ENCODE measurements at regions of chr17 and their contacts with region 1.

Region 1: DNA sequence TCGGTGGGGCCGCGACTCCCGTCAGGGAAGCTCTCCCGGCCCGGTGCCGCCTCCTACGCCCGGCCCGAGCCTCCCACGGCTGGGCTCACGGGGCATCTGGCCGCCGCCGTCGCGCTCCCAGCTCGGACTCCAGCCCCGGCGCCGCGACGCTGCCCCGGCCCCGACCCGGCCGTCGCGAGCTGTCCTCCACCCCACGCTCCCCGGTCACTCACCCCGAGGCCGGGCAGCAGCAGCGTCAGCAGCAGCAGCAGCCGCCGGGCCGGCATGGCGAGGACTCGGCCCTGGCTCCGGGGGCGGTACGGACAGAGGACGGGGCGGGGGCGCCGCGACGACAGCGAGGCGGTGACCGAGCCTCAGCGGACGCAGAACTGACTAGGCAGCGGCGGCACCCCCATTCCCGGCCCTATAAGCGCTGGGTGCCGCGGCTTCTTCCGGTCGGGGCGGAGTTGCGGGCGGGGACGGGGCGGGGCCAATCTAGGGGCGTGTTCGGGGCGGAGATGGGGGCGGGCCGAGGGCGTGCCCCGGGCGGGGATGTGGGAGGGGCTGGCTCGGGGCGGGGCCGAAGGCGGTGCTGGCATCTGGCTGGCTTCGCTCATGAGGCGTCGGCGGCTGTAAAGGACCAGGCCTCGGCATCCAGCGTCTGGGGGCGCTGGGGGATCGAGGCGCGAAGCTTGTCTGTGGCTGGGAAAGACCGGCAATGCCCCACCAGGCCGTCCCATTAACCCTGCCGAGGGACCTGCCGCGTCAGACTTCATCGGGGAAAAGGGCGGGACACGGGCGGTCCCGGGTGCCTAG is at the start of gene ERN1:
- DNase-seq: peak; percentile 81
- ATAC-seq: peak; percentile 88
- H3K4me3 Mint-ChIP-seq: peak within 1 kb of the TSS; percentile 83
- H3K27ac Mint-ChIP-seq: peak within 1 kb of the TSS; percentile 88
- H3K4me1 Mint-ChIP-seq: peaks cover 27% of the 10 kb centered on the region
- H3K27me3 Mint-ChIP-seq: peaks cover 1% of the 10 kb centered on the region
- CTCF ChIP-seq: no peak
- total RNA-seq, gene ERN1: 11.9 and 12.9 TPM in 2 replicates

Region 2: GRCh38 chr17:63697341-63698286 is 432.3 kb before region 1 on chr17:
- CTCF ChIA-PET with region 1: no interaction called
- POLR2A ChIA-PET with region 1: no interaction called
- intact Hi-C with region 1: loop called (anchors 2 kb)
- DNase-seq: peak; percentile 78
- ATAC-seq: peak; percentile 52
- H3K4me3 Mint-ChIP-seq: peak overlapping the region; percentile 96
- H3K27ac Mint-ChIP-seq: peak overlapping the region; percentile 97
- H3K4me1 Mint-ChIP-seq: peaks cover 70% of the 10 kb centered on the region
- H3K27me3 Mint-ChIP-seq: no peaks in the 10 kb centered on the region
- CTCF ChIP-seq: no peak

Region 3: DNA sequence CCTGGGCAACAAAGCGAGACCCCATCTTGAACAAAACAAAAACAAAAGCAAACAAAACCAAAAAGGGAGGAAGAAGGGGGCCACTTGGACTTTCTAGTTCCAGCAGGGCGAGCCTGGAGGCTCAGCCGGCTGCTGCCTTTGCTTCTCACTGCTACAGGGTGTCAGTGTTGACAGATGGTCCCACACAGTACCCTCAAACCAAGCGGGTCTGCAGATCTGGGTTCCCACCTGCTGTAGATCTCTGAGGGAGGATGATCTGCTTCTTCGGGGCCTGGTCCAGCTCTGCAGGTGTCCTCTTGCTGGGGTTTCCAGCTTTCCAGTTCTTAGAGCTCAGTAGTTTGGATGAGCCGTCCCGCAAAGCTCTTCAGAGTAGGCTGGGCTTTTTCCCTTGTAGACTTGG is 225.6 kb before region 1 on chr17:
- CTCF ChIA-PET with region 1: interaction called, 56 read pairs
- POLR2A ChIA-PET with region 1: interaction called, 4 read pairs
- intact Hi-C with region 1: no loop called
- DNase-seq: peak; percentile 10
- ATAC-seq: no peak
- H3K4me3 Mint-ChIP-seq: no peak overlapping the region
- H3K27ac Mint-ChIP-seq: no peak overlapping the region
- H3K4me1 Mint-ChIP-seq: peaks cover 4% of the 10 kb centered on the region
- H3K27me3 Mint-ChIP-seq: no peaks in the 10 kb centered on the region
- CTCF ChIP-seq: no peak

Region 4: DNA sequence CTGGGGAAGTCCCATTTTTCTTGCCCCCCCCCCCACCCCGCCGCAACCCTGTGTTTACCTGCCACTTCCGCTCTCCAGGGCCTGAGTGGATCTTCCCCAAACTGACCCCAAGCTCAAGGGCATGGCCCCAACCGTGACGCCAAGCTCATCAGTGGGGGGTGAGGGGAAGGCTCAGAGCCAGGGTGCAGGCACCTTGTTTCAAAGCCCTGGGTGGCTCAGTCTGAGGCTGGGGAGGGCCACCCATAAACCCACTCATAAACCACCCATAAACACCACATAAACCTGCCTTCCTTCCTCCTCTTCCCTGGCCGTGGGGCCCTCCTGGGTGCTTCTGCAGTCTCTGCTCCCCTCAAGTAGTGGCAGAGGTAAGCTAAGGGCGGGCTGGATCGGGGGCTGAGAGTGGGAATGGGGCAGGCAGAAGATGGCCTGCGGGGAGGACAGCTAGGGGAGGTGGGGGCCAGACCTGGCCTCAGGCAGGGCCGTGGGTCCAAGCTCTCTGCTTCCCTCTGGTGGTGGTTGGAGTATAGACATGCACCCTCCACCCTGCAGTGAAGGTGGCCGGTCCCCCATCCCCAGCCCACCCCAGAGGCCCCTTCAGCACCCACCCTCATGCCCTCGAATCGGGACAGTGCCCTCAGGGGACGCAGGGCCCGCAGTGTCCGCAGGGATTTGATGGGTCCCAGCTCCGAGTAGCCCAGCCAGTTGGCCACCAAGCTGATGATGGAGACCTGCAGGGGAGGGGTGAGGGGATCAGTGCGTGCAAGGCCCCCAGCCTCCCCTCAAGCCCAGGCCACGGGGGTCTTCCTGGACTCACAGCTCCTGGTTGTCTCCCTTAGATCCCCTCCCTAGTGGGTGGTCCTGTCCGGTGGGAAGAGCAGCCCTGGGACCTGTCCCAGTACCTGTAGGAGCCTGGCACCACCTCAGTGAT is 183.3 kb before region 1 on chr17:
- CTCF ChIA-PET with region 1: interaction called, 16 read pairs
- POLR2A ChIA-PET with region 1: interaction called, 7 read pairs
- intact Hi-C with region 1: no loop called
- DNase-seq: peak; percentile 67
- ATAC-seq: peak; percentile 72
- H3K4me3 Mint-ChIP-seq: peak overlapping the region; percentile 74
- H3K27ac Mint-ChIP-seq: peak overlapping the region; percentile 91
- H3K4me1 Mint-ChIP-seq: peaks cover 47% of the 10 kb centered on the region
- H3K27me3 Mint-ChIP-seq: no peaks in the 10 kb centered on the region
- CTCF ChIP-seq: no peak

Region 5: GRCh38 chr17:64056269-64057005 is 73.5 kb before region 1 on chr17:
- CTCF ChIA-PET with region 1: interaction called, 55 read pairs
- POLR2A ChIA-PET with region 1: interaction called, 8 read pairs
- intact Hi-C with region 1: loop called (anchors 1 kb)
- DNase-seq: no peak
- ATAC-seq: peak; percentile 90
- H3K4me3 Mint-ChIP-seq: no peak overlapping the region
- H3K27ac Mint-ChIP-seq: peak overlapping the region; percentile 51
- H3K4me1 Mint-ChIP-seq: peaks cover 13% of the 10 kb centered on the region
- H3K27me3 Mint-ChIP-seq: no peaks in the 10 kb centered on the region
- CTCF ChIP-seq: no peak

Region 6: GRCh38 chr17:64117981-64118979 is 11.7 kb before region 1 on chr17:
- CTCF ChIA-PET with region 1: interaction called, 13 read pairs
- POLR2A ChIA-PET with region 1: interaction called, 11 read pairs
- intact Hi-C with region 1: no loop called
- DNase-seq: no peak
- ATAC-seq: no peak
- H3K4me3 Mint-ChIP-seq: no peak overlapping the region
- H3K27ac Mint-ChIP-seq: no peak overlapping the region
- H3K4me1 Mint-ChIP-seq: peaks cover 18% of the 10 kb centered on the region
- H3K27me3 Mint-ChIP-seq: no peaks in the 10 kb centered on the region
- CTCF ChIP-seq: no peak

Region 7: DNA sequence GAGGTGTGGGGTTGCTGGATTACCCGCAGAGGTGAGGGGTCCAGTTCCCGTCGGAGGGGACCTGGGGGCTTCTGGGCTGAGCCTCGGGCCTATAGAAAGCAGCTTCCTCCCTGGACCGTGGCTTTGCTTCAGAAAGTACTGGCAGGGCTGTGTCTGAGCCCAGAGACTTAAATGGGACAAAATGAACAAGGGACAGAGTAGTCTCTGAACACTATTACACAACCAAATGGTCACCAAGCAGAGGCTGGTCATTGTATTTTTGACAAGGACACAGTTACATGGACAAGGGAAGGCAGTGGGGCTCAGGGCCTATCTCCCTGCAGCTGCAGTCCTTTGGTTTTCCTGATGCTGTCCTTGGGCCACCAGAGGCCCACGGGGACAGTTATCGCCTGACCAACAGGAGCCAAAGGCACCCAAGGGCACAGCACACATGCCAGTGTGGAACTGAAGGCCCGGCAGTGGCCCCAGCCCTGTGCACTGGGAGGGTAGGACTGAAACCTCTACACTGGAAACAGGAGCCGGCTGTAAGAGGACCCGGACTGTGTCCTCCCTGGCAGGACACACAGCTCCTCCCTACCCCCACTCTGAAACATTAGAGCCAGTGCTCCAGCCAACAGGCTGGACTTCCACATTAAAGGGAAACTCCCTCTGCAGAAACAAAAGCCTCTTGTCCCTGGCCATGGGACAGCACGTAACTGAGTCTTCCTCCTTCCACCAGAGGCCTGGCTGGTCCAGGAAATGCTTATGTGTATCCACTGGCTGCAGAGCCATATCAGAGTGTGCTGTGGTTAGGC is 26.0 kb after region 1 on chr17:
- CTCF ChIA-PET with region 1: no interaction called
- POLR2A ChIA-PET with region 1: no interaction called
- intact Hi-C with region 1: no loop called
- DNase-seq: no peak
- ATAC-seq: no peak
- H3K4me3 Mint-ChIP-seq: no peak overlapping the region
- H3K27ac Mint-ChIP-seq: no peak overlapping the region
- H3K4me1 Mint-ChIP-seq: no peaks in the 10 kb centered on the region
- H3K27me3 Mint-ChIP-seq: no peaks in the 10 kb centered on the region
- CTCF ChIP-seq: no peak

Region 8: DNA sequence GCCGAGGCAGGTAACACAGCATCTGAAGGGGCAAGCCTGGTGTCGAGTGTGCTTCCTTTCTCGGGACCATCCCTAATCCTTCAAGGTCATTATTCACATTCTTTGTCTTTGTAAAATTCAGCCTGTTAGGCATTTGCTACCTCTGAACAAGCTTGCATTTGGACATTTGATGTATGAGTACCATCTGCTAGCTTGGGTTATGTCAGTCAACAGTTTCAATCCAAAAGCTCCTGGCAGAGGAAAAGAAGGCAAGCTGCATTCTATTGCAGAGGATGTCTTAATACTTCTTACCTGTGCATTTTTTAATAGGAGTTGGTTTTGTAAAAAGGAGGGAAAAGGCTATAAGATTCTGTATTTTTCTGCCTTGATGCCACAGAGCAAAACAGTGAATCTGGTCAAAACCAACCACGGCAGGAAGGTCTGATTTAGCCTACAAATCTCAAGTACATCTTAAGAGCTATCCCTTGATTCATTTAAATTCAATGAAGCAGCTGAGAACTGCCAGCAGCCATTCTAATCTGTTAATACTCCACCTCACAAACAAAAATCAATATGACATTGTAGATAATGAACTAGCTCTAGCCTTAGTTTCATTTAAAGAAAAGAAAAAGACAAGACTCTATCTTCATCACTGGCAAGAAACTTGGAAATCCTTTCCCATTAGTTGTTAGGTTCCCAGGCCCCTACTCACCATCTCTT is 94.1 kb after region 1 on chr17:
- CTCF ChIA-PET with region 1: no interaction called
- POLR2A ChIA-PET with region 1: no interaction called
- intact Hi-C with region 1: no loop called
- DNase-seq: no peak
- ATAC-seq: no peak
- H3K4me3 Mint-ChIP-seq: no peak overlapping the region
- H3K27ac Mint-ChIP-seq: no peak overlapping the region
- H3K4me1 Mint-ChIP-seq: no peaks in the 10 kb centered on the region
- H3K27me3 Mint-ChIP-seq: no peaks in the 10 kb centered on the region
- CTCF ChIP-seq: no peak

Region 9: DNA sequence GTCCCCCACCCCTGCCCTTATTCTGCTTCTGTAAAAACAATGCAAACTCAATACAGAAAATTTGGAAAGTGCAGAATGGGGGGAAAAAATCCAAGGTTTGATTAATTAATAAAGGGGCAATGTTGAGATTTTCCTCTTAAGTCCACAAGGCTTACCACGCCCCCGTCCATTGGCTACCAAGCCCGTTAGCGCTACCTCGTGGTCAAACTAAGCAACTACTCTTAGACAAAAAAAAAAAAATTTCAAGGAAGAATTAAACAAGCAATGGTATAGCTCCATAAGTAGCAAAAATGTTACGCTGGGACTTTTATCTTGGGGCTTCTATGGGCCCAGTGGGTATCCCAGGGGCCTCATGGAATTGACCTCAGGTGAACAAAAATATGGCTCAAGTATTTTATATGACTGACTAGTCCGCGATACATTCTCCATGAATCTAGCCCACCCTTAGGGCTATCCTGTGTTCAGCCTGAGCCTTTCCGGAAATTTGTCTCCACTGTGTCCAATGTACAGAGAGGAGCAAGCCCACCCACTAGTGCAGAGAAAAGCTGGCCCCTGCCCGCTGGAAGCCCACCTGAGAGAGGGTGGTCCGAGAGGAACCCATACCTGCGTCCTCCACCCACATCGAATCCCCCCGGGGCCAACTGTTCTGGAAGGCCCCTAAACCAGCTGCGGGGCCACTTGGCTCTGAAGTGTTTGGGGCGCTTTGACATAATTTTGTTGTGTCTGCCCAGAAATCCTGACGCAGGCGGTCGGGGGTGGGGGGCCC is 152.2 kb after region 1 on chr17:
- CTCF ChIA-PET with region 1: interaction called, 16 read pairs
- POLR2A ChIA-PET with region 1: interaction called, 7 read pairs
- intact Hi-C with region 1: loop called (anchors 5 kb)
- DNase-seq: no peak
- ATAC-seq: peak; percentile 58
- H3K4me3 Mint-ChIP-seq: no peak overlapping the region
- H3K27ac Mint-ChIP-seq: no peak overlapping the region
- H3K4me1 Mint-ChIP-seq: no peaks in the 10 kb centered on the region
- H3K27me3 Mint-ChIP-seq: no peaks in the 10 kb centered on the region
- CTCF ChIP-seq: no peak

Measured in activated B cell treated with CpG ODN at 0.5 μM for 24 hours (primary cell).